ENCODE measurements at regions of chr7 and their contacts with region 1.

Region 1: DNA sequence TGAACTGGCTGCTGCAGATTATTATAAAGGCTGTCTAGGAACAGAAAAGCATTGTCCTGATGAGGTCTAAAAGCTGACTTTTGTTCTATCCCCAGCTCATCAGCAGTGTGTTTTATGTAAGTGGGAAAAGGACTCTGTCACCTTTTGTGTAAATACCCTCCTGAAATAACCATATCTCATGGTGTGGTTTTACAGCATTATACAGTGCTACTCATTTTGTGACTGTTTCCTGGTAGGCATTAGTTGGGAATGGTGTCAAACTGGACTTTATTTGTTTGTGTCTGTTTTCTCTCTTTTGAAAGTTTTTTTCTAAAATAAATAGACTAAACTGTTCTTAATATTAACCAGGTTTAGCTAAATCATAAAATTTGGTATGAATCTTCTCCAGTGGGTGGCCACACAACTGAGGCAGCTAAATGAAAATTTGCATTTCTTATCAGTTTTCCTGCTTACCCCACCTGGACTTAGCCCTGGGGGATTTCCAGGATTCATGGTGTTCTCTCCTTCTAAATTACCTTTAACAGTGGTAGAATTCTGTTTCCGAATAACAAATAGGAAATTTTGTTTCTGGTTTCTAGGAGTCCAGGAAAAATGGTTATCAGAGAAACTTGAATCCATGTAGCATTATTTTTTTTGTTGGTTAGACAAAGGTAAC is 140.9 kb downstream of the LHFPL3 start:
- DNase-seq: no peak
- ATAC-seq: no peak
- H3K4me3 ChIP-seq: no peak overlapping the region
- H3K27ac ChIP-seq: no peak overlapping the region
- H3K4me1 ChIP-seq: no peaks in the 10 kb centered on the region
- H3K27me3 ChIP-seq: peaks cover 0 to 3% (median 0%) of the 10 kb centered on the region in 7 donors
- CTCF ChIP-seq: no peak

Region 2: GRCh38 chr7:104328296-104328969 is 140.9 kb before region 1 on chr7 and contains the start of gene LHFPL3:
- intact Hi-C with region 1: no loop called
- DNase-seq: no peak
- ATAC-seq: no peak
- H3K4me3 ChIP-seq: peak within 1 kb of the TSS in 3 of 10 donors; percentile 17 to 29 (median 20)
- H3K27ac ChIP-seq: no peak within 1 kb of the TSS
- H3K4me1 ChIP-seq: peaks cover 0 to 16% (median 6%) of the 10 kb centered on the region in 9 donors
- H3K27me3 ChIP-seq: peaks cover 4 to 74% (median 69%) of the 10 kb centered on the region in 7 donors
- CTCF ChIP-seq: no peak
- total RNA-seq, gene LHFPL3: not detected

Region 3: DNA sequence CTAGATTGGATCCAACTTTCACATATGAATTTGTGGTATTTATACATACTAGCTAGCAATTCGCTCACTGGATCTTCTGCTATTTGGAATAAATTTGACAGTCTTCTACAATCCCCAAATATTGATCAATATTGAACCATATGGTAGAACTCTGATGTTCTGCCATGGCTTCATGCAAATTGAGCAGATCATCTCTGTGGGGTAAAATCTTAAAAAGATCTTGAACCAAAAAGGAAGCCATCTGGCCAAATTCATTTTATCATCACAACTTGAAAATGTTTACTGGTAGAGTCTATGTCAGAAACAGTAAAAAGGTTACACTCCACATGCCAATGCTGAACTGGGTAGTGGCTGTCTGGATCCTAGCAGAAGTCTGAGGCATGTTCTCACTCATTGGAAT is 60.9 kb before region 1 on chr7:
- intact Hi-C with region 1: loop called in 1 of 10 experiments (anchors 10 kb)
- DNase-seq: no peak
- ATAC-seq: no peak
- H3K4me3 ChIP-seq: no peak overlapping the region
- H3K27ac ChIP-seq: no peak overlapping the region
- H3K4me1 ChIP-seq: no peaks in the 10 kb centered on the region
- H3K27me3 ChIP-seq: peaks cover 0 to 1% (median 0%) of the 10 kb centered on the region in 7 donors
- CTCF ChIP-seq: no peak

Measured in heart right ventricle (tissue), 16 donors.